ENCODE measurements at regions of chr5 and their contacts with region 1.

Region 1: DNA sequence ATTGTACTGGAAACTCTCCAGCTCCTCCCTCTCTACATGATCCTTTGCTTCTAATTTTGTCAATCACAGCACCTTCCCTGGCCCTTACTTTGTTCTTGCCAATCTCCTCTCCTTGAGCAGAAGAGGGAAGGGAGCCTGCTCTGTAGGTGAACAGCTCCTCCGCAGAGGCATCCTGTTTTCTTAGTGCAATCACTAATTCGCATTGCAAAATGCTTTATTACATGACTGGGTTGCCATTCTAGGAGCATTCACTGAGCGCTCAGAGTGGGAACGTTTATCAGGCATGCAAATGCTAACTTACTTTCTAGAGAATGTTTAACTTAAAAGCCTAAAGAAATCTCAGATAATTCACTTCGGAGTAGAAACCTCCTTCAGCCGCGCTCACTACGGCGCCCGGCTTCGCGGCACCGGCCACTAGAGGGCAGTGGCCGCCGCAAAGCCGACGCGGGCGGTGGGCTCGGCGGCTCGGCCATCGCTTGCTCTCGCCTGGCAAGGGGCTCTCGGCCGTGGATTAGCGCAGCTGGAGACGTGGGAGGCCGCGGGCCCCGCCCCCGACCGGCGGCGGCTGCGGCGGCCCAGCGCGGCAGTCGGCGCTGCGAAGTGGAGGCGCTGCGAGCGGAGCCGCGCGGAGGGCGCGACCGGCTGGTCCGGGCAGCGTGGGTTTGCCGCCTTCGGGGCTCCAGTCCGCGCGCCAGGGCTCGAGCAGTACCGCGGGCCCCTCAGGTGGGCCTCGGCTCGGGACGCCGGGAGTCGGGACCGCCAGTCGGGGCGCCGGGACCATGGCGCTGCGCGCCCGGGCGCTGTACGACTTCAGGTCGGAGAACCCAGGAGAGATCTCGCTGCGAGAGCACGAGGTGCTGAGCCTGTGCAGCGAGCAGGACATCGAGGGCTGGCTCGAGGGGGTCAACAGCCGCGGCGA is at the start of gene SNX18:
- DNase-seq: peak; percentile 95
- ATAC-seq: peak; percentile 96 to 97
- total RNA-seq, gene SNX18: 15.1 to 15.4 TPM

Region 2: DNA sequence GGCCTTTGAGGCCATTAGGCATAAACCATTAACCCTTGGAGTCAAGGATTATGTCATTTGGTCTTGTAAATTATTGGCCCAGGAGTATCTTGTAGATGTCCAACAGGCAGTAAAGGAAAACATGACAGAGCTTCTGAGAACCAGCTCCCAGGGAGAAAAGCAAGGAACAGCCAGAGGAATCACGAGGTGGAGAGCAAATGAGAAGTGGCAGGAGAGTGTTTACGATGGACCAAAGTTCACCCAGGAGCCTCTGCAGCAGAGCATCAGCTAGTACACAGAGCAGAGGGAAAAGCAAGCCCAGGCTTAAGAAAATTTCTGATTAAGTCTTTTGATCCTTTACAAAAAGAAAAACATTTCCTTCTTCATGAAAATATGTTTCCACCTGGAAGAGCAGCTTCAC is 750.8 kb before region 1 on chr5:
- intact Hi-C with region 1: no loop called
- DNase-seq: no peak
- ATAC-seq: no peak

Region 3: GRCh38 chr5:54390015-54390414 is 127.4 kb before region 1 on chr5:
- intact Hi-C with region 1: no loop called
- DNase-seq: no peak
- ATAC-seq: peak in 1 of 2 donors; percentile 36

Region 4: GRCh38 chr5:54646356-54647101 is 129.1 kb after region 1 on chr5:
- intact Hi-C with region 1: loop called in 1 of 2 experiments (anchors 5 kb)
- DNase-seq: peak; percentile 88
- ATAC-seq: peak; percentile 91 to 96

Region 5: GRCh38 chr5:54844905-54845566 is 327.6 kb after region 1 on chr5:
- intact Hi-C with region 1: loop called (anchors 1 to 5 kb)
- DNase-seq: no peak
- ATAC-seq: no peak

Region 6: GRCh38 chr5:54868511-54869483 is 351.4 kb after region 1 on chr5:
- intact Hi-C with region 1: loop called in 1 of 2 experiments (anchors 2 kb)
- DNase-seq: no peak
- ATAC-seq: no peak

Region 7: DNA sequence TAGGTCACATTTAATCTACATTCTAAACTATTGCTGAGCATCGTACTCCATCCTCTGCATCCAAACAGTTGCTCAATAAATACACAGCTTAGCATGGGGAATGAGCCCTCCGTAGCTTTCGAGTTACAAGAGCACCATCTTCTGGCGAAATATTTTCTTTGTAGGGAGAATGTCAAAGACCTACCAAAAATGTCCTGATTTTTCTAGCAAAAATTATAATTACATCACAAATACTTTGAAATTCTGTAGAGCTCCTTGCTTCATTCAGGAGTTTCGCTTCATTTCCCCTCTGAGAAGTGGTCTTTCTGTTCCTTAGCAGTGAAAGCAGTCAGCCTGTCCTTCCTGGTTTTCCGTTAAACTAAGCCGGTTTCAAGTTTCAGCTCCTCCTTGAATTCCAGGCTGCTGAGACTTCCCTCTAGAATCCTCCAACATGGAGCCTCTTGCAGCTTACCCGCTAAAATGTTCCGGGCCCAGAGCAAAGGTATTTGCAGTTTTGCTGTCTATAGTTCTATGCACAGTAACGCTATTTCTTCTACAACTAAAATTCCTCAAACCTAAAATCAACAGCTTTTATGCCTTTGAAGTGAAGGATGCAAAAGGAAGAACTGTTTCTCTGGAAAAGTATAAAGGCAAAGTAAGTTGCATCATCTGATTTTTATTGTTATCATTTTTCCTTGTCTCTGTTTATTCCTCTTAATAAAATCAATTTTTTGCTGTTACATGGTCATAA is 642.5 kb after region 1 on chr5 and contains the start of gene GPX8:
- intact Hi-C with region 1: loop called in 1 of 2 experiments (anchors 10 kb)
- DNase-seq: no peak
- ATAC-seq: peak; percentile 87 to 94
- total RNA-seq, gene GPX8: 14.5 to 21.8 TPM